Panc1 (cell line): ENCODE measurements at regions of chr11 and their contacts with region 1.

Region 1: GRCh38 chr11:47967577-47968425 is 12.6 kb upstream of the PTPRJ start:
- DNase-seq: no peak
- ATAC-seq: no peak
- H3K4me3 ChIP-seq: no peak overlapping the region
- H3K27ac ChIP-seq: no peak overlapping the region
- H3K4me1 ChIP-seq: peaks cover 5% of the 10 kb centered on the region; the same call in 1 of the 2 replicates
- H3K27me3 ChIP-seq: no peaks in the 10 kb centered on the region
- CTCF ChIP-seq: no peak

Region 2: GRCh38 chr11:47923667-47924066 is 44.1 kb before region 1 on chr11:
- CTCF ChIA-PET with region 1: no interaction called
- POLR2A ChIA-PET with region 1: interaction called, 13 read pairs
- in situ Hi-C with region 1: no loop called
- intact Hi-C with region 1: no loop called
- DNase-seq: no peak
- ATAC-seq: peak; percentile 7; the same call in 1 of the 2 replicates
- H3K4me3 ChIP-seq: no peak overlapping the region
- H3K27ac ChIP-seq: peak overlapping the region; percentile 76
- H3K4me1 ChIP-seq: peaks cover 29% of the 10 kb centered on the region
- H3K27me3 ChIP-seq: no peaks in the 10 kb centered on the region
- CTCF ChIP-seq: no peak

Region 3: GRCh38 chr11:47938791-47939560 is 28.8 kb before region 1 on chr11:
- CTCF ChIA-PET with region 1: no interaction called
- POLR2A ChIA-PET with region 1: interaction called, 4 read pairs
- in situ Hi-C with region 1: no loop called
- intact Hi-C with region 1: loop called (anchors 5 kb)
- DNase-seq: no peak
- ATAC-seq: no peak
- H3K4me3 ChIP-seq: no peak overlapping the region
- H3K27ac ChIP-seq: peak overlapping the region; percentile 81
- H3K4me1 ChIP-seq: peaks cover 36% of the 10 kb centered on the region
- H3K27me3 ChIP-seq: no peaks in the 10 kb centered on the region
- CTCF ChIP-seq: no peak

Region 4: GRCh38 chr11:47980245-47981049 is 12.6 kb after region 1 on chr11 and contains the start of gene PTPRJ:
- CTCF ChIA-PET with region 1: no interaction called
- POLR2A ChIA-PET with region 1: no interaction called
- in situ Hi-C with region 1: no loop called
- intact Hi-C with region 1: no loop called
- DNase-seq: no peak
- ATAC-seq: peak; percentile 77
- H3K4me3 ChIP-seq: peak within 1 kb of the TSS; percentile 64 to 67
- H3K27ac ChIP-seq: peak within 1 kb of the TSS; percentile 89
- H3K4me1 ChIP-seq: peaks cover 39% of the 10 kb centered on the region
- H3K27me3 ChIP-seq: no peaks in the 10 kb centered on the region
- CTCF ChIP-seq: no peak
- total RNA-seq, gene PTPRJ: 73.6 TPM